ENCODE measurements at regions of chr2 and their contacts with region 1.

Region 1: GRCh38 chr2:143128681-143129580 is at the start of gene ARHGAP15:
- DNase-seq: peak; percentile 61
- ATAC-seq: peak; percentile 91
- H3K4me3 Mint-ChIP-seq: peak within 1 kb of the TSS; percentile 84
- H3K27ac Mint-ChIP-seq: peak within 1 kb of the TSS; percentile 100
- H3K4me1 Mint-ChIP-seq: peaks cover 49% of the 10 kb centered on the region
- H3K27me3 Mint-ChIP-seq: no peaks in the 10 kb centered on the region
- CTCF ChIP-seq: no peak
- total RNA-seq, gene ARHGAP15: 101 and 112 TPM in 2 replicates

Region 2: GRCh38 chr2:142270291-142270690 is 858.6 kb before region 1 on chr2:
- CTCF ChIA-PET with region 1: no interaction called
- POLR2A ChIA-PET with region 1: no interaction called
- intact Hi-C with region 1: no loop called
- DNase-seq: no peak
- ATAC-seq: no peak
- H3K4me3 Mint-ChIP-seq: no peak overlapping the region
- H3K27ac Mint-ChIP-seq: no peak overlapping the region
- H3K4me1 Mint-ChIP-seq: no peaks in the 10 kb centered on the region
- H3K27me3 Mint-ChIP-seq: no peaks in the 10 kb centered on the region
- CTCF ChIP-seq: no peak

Region 3: DNA sequence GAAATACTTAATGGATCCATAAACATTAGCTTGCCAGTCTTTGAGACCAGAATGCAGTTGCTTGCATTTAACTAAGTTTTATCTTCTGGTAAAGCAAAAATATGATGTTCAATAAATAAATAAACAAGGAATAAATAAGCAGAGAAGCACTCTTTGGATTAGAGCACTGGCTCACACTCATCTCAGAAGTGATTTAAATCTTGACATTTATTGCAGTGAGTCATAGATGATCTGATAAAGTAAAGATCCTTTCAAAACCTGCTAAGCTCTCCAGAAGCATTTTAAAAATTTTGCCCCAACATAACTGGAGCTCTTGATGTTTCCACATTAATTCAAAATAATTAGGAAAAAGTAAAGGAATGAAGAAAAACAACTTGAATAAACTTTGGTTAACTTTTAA is 184.7 kb before region 1 on chr2:
- CTCF ChIA-PET with region 1: no interaction called
- POLR2A ChIA-PET with region 1: no interaction called
- intact Hi-C with region 1: no loop called
- DNase-seq: no peak
- ATAC-seq: no peak
- H3K4me3 Mint-ChIP-seq: no peak overlapping the region
- H3K27ac Mint-ChIP-seq: no peak overlapping the region
- H3K4me1 Mint-ChIP-seq: peaks cover 12% of the 10 kb centered on the region
- H3K27me3 Mint-ChIP-seq: no peaks in the 10 kb centered on the region
- CTCF ChIP-seq: no peak

Region 4: GRCh38 chr2:143140864-143141661 is 12.1 kb after region 1 on chr2:
- CTCF ChIA-PET with region 1: interaction called, 10 read pairs
- POLR2A ChIA-PET with region 1: interaction called, 66 read pairs
- intact Hi-C with region 1: loop called (anchors 1 kb)
- DNase-seq: no peak
- ATAC-seq: peak; percentile 91
- H3K4me3 Mint-ChIP-seq: peak overlapping the region; percentile 56
- H3K27ac Mint-ChIP-seq: peak overlapping the region; percentile 89
- H3K4me1 Mint-ChIP-seq: peaks cover 92% of the 10 kb centered on the region
- H3K27me3 Mint-ChIP-seq: no peaks in the 10 kb centered on the region
- CTCF ChIP-seq: no peak

Region 5: DNA sequence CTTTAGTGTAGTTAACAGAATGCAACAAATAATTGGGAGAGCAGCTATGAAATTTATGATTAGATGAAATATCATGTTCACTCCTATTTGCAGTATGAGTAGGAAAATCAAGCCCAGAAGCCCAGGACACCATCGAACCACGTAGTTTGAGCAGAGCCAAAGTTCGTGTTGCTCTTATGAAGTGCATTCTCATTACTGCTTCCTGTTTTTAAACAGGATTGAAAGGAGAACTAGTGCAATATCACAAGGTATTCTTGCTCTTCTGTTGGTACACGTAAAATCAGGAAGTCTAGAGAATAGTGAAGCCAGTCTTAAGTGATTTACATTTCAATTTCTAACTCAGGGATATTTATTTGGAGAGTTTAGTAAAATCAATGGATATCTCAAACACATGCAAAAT is 21.4 kb after region 1 on chr2:
- CTCF ChIA-PET with region 1: interaction called, 6 read pairs
- POLR2A ChIA-PET with region 1: interaction called, 9 read pairs
- intact Hi-C with region 1: loop called (anchors 1 kb)
- DNase-seq: no peak
- ATAC-seq: peak; percentile 89
- H3K4me3 Mint-ChIP-seq: peak overlapping the region; percentile 56
- H3K27ac Mint-ChIP-seq: peak overlapping the region; percentile 87
- H3K4me1 Mint-ChIP-seq: peaks cover 91% of the 10 kb centered on the region
- H3K27me3 Mint-ChIP-seq: no peaks in the 10 kb centered on the region
- CTCF ChIP-seq: no peak

Region 6: GRCh38 chr2:143177096-143177786 is 48.3 kb after region 1 on chr2:
- CTCF ChIA-PET with region 1: no interaction called
- POLR2A ChIA-PET with region 1: no interaction called
- intact Hi-C with region 1: loop called (anchors 1 kb)
- DNase-seq: no peak
- ATAC-seq: peak; percentile 94
- H3K4me3 Mint-ChIP-seq: peak overlapping the region; percentile 87
- H3K27ac Mint-ChIP-seq: peak overlapping the region; percentile 94
- H3K4me1 Mint-ChIP-seq: peaks cover 44% of the 10 kb centered on the region
- H3K27me3 Mint-ChIP-seq: no peaks in the 10 kb centered on the region
- CTCF ChIP-seq: no peak

Measured in activated B cell treated with CpG ODN at 0.5 μM for 24 hours (primary cell).